ENCODE measurements at regions of chr5 and their contacts with region 1.

Region 1: DNA sequence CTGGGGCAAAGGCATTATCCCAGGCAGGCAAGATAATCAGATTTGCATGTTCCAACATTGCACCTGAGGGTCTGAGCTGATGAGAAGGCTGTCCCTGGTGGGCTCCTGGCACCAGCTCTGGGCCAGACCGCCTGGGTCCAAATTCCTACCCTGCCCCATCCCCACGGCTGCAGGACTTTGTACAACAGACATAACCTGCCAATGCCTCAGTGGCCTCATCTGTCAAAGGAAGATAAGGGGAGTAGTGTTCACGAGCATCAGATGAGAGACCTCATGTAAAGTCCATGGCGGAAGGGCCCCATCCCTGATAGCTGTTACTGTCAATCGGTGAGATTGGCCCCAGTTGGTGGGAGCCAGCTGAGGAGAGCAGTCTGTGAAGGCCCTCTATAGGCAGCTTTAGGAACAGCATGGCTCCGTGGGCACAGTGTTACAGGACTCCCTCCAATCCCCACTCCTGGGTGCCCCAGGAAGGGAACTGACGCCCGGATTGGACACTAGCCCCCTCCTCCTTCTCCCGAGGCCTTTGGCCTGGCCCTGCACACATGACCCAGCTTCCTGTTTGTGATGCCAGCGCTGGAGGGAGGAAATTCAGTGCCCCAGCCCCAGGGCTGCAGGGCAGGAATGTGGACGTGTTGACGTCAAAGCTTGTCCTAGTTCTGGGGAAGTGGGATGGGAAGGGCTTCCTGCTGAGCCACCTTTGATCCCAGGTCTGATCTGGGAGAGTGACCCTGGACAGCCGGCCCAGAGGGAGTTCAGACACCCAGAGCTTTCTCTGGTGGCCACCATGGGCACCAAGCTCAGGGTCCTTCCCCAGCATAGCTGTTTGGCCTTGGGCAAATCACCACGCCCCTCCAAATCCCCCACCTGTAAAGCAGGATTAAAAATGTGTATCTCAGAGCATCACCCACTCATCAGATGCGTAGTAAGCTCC is 56.2 kb downstream of the DUSP1 start:
- DNase-seq: peak; percentile 58 to 69 (median 61)
- H3K4me3 ChIP-seq: no peak overlapping the region
- H3K4me3 Mint-ChIP-seq: no peak overlapping the region
- H3K27ac ChIP-seq: no peak overlapping the region
- H3K27ac Mint-ChIP-seq: peak overlapping the region in 5 of 7 donors; percentile 0 to 62 (median 41)
- H3K4me1 ChIP-seq: peaks cover 11% of the 10 kb centered on the region
- H3K4me1 Mint-ChIP-seq: peaks cover 15 to 22% (median 17%) of the 10 kb centered on the region in 4 donors
- H3K27me3 ChIP-seq: no peaks in the 10 kb centered on the region
- H3K27me3 Mint-ChIP-seq: peaks cover 9 to 13% of the 10 kb centered on the region in 2 donors

Region 2: DNA sequence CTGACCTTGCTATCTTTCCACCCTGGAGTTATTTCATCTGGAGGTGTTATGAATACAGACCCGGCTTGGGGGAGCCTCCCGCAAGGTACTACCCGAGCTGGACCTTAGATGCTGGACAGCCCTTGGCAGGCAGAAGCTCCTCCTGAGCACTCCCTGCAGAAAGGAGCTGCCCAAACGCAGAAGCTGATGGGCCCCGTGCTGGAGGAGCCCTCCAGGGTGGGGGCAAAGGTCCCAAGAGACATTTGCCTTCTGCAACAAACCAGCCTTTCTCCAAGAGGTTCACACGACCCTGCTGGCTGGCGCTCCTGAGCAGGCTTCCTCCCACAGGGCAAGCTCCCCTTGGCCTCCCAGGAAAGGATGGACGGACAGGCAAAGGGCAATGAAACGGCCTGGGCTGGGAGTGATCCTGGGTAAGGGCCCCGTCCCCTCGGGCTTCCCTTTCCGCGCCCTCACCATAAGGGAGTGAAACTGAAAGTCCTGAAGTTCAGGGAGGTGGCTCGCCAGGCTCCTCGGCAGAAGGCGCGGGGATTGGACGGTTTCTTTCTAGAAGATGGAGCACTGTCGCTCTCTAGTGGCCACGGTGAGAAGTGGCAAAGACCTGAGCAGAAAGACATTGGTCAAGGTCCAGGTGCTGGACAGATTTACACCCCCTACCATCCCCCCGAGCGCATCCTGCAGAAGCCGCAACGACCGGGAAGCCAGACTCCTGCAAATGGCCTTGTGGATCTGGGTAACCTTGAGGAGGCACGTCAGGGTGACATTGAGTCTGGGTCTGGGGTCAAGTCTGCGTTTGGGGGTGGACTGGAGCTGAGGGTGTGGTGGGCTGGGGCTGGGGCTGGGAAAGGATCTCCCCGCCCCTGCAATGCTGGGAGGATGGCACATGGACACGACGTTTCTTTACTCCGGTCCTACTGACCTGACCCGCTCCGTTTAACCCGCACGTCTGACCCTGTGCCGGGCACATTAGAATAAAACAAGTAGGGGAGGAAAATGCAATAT is 17.3 kb before region 1 on chr5:
- CTCF ChIA-PET with region 1: interaction called, 66 read pairs
- POLR2A ChIA-PET with region 1: interaction called, 3 read pairs
- intact Hi-C with region 1: no loop called
- DNase-seq: peak; percentile 81 to 85 (median 82)
- H3K4me3 ChIP-seq: peak overlapping the region; percentile 75 to 77
- H3K4me3 Mint-ChIP-seq: peak overlapping the region; percentile 93 to 99 (median 96)
- H3K27ac ChIP-seq: peak overlapping the region; percentile 71
- H3K27ac Mint-ChIP-seq: peak overlapping the region; percentile 91 to 98 (median 96)
- H3K4me1 ChIP-seq: peaks cover 24% of the 10 kb centered on the region
- H3K4me1 Mint-ChIP-seq: peaks cover 11 to 27% (median 21%) of the 10 kb centered on the region in 4 donors
- H3K27me3 ChIP-seq: peaks cover 7% of the 10 kb centered on the region
- H3K27me3 Mint-ChIP-seq: peaks cover 14 to 15% of the 10 kb centered on the region in 2 donors

Region 3: GRCh38 chr5:172764849-172765765 is 50.4 kb after region 1 on chr5:
- CTCF ChIA-PET with region 1: interaction called, 68 read pairs
- POLR2A ChIA-PET with region 1: interaction called, 97 read pairs
- intact Hi-C with region 1: loop called (anchors 1 kb)
- DNase-seq: peak; percentile 98 to 100 (median 99)
- H3K4me3 ChIP-seq: peak overlapping the region in 1 of 2 donors; percentile 52
- H3K4me3 Mint-ChIP-seq: peak overlapping the region; percentile 77 to 90 (median 84)
- H3K27ac ChIP-seq: peak overlapping the region; percentile 100
- H3K27ac Mint-ChIP-seq: peak overlapping the region; percentile 95 to 100 (median 99)
- H3K4me1 ChIP-seq: peaks cover 55% of the 10 kb centered on the region
- H3K4me1 Mint-ChIP-seq: peaks cover 46 to 70% (median 58%) of the 10 kb centered on the region in 4 donors
- H3K27me3 ChIP-seq: no peaks in the 10 kb centered on the region
- H3K27me3 Mint-ChIP-seq: peaks cover 0 to 1% of the 10 kb centered on the region in 2 donors

Region 4: DNA sequence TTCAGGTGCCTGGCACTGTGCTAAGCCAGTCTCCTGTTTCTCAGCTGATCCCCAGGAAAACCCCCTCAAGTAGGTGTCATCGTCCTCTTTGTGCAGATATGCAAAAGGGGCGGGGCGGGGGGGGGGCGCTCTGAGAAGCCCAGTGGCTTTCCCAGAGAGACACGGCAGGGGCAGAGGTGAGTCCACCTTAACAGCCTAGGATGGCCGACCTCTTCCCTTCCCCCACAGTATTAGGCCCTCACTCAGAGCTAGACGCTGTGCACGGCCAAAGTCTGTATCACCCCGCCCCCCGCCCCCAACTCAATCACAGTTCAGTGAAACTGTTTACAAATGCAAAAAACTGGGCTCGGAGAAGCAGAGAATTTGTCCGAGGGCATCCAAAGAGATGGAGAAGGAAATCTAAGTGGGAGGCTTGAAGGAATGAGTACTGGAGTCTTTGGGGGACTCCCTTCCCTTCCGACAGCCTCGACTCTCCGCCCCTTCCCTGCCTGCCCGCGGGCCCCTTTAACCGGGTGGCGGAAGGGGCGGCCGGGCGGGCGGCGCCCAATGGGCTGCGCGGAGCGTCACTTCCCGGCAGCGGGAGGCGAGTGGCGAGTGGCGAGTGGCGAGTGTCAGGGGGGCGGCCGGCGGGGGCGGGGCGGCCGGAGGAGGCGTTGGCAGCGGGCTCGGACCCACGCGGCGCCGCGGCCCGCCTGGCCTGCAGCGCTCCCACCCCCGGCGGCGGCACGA is 119.1 kb after region 1 on chr5 and contains the start of gene ERGIC1:
- CTCF ChIA-PET with region 1: interaction called, 14 read pairs
- POLR2A ChIA-PET with region 1: interaction called, 4 read pairs
- intact Hi-C with region 1: loop called (anchors 1 kb)
- DNase-seq: peak; percentile 59 to 73 (median 63)
- H3K4me3 ChIP-seq: peak within 1 kb of the TSS; percentile 63 to 69
- H3K4me3 Mint-ChIP-seq: peak within 1 kb of the TSS; percentile 90 to 96 (median 92)
- H3K27ac ChIP-seq: peak within 1 kb of the TSS; percentile 82
- H3K27ac Mint-ChIP-seq: peak within 1 kb of the TSS; percentile 89 to 97 (median 93)
- H3K4me1 ChIP-seq: peaks cover 47% of the 10 kb centered on the region
- H3K4me1 Mint-ChIP-seq: peaks cover 25 to 52% (median 36%) of the 10 kb centered on the region in 4 donors
- H3K27me3 ChIP-seq: no peaks in the 10 kb centered on the region
- H3K27me3 Mint-ChIP-seq: no peaks in the 10 kb centered on the region
- total RNA-seq, gene ERGIC1: 45.8 to 51.0 TPM

Region 5: GRCh38 chr5:172910828-172911627 is 196.3 kb after region 1 on chr5:
- CTCF ChIA-PET with region 1: interaction called, 20 read pairs
- POLR2A ChIA-PET with region 1: no interaction called
- intact Hi-C with region 1: loop called (anchors 5 kb)
- DNase-seq: peak in 3 of 5 donors; percentile 4 to 12 (median 6)
- H3K4me3 ChIP-seq: no peak overlapping the region
- H3K4me3 Mint-ChIP-seq: no peak overlapping the region
- H3K27ac ChIP-seq: no peak overlapping the region
- H3K27ac Mint-ChIP-seq: no peak overlapping the region
- H3K4me1 ChIP-seq: no peaks in the 10 kb centered on the region
- H3K4me1 Mint-ChIP-seq: no peaks in the 10 kb centered on the region
- H3K27me3 ChIP-seq: no peaks in the 10 kb centered on the region
- H3K27me3 Mint-ChIP-seq: no peaks in the 10 kb centered on the region

Region 6: GRCh38 chr5:172939611-172940267 is 225.0 kb after region 1 on chr5:
- CTCF ChIA-PET with region 1: interaction called, 547 read pairs
- POLR2A ChIA-PET with region 1: interaction called, 4 read pairs
- intact Hi-C with region 1: no loop called
- DNase-seq: no peak
- H3K4me3 ChIP-seq: no peak overlapping the region
- H3K4me3 Mint-ChIP-seq: no peak overlapping the region
- H3K27ac ChIP-seq: no peak overlapping the region
- H3K27ac Mint-ChIP-seq: no peak overlapping the region
- H3K4me1 ChIP-seq: no peaks in the 10 kb centered on the region
- H3K4me1 Mint-ChIP-seq: no peaks in the 10 kb centered on the region
- H3K27me3 ChIP-seq: no peaks in the 10 kb centered on the region
- H3K27me3 Mint-ChIP-seq: no peaks in the 10 kb centered on the region

Region 7: GRCh38 chr5:173065155-173065554 is 350.4 kb after region 1 on chr5:
- CTCF ChIA-PET with region 1: no interaction called
- POLR2A ChIA-PET with region 1: no interaction called
- intact Hi-C with region 1: no loop called
- DNase-seq: peak in 1 of 5 donors; percentile 8
- H3K4me3 ChIP-seq: no peak overlapping the region
- H3K4me3 Mint-ChIP-seq: peak overlapping the region; percentile 41 to 87 (median 75)
- H3K27ac ChIP-seq: peak overlapping the region; percentile 34
- H3K27ac Mint-ChIP-seq: peak overlapping the region; percentile 58 to 89 (median 82)
- H3K4me1 ChIP-seq: peaks cover 78% of the 10 kb centered on the region
- H3K4me1 Mint-ChIP-seq: peaks cover 48 to 87% (median 67%) of the 10 kb centered on the region in 4 donors
- H3K27me3 ChIP-seq: no peaks in the 10 kb centered on the region
- H3K27me3 Mint-ChIP-seq: no peaks in the 10 kb centered on the region

Region 8: GRCh38 chr5:173144200-173145176 is 429.7 kb after region 1 on chr5 and contains the start of gene BNIP1:
- CTCF ChIA-PET with region 1: interaction called, 3 read pairs
- POLR2A ChIA-PET with region 1: no interaction called
- intact Hi-C with region 1: loop called (anchors 2 kb)
- DNase-seq: peak; percentile 95 to 98 (median 95)
- H3K4me3 ChIP-seq: peak within 1 kb of the TSS; percentile 80 to 100
- H3K4me3 Mint-ChIP-seq: peak within 1 kb of the TSS; percentile 97 to 99 (median 98)
- H3K27ac ChIP-seq: peak within 1 kb of the TSS; percentile 94
- H3K27ac Mint-ChIP-seq: peak within 1 kb of the TSS; percentile 99 to 100 (median 99)
- H3K4me1 ChIP-seq: peaks cover 9% of the 10 kb centered on the region
- H3K4me1 Mint-ChIP-seq: peaks cover 8 to 19% (median 11%) of the 10 kb centered on the region in 4 donors
- H3K27me3 ChIP-seq: no peaks in the 10 kb centered on the region
- H3K27me3 Mint-ChIP-seq: no peaks in the 10 kb centered on the region
- total RNA-seq, gene BNIP1: 7.1 to 7.7 TPM